OCI-LY7 (cell line): ENCODE measurements at regions of chr11 and their contacts with region 1.

Region 1: DNA sequence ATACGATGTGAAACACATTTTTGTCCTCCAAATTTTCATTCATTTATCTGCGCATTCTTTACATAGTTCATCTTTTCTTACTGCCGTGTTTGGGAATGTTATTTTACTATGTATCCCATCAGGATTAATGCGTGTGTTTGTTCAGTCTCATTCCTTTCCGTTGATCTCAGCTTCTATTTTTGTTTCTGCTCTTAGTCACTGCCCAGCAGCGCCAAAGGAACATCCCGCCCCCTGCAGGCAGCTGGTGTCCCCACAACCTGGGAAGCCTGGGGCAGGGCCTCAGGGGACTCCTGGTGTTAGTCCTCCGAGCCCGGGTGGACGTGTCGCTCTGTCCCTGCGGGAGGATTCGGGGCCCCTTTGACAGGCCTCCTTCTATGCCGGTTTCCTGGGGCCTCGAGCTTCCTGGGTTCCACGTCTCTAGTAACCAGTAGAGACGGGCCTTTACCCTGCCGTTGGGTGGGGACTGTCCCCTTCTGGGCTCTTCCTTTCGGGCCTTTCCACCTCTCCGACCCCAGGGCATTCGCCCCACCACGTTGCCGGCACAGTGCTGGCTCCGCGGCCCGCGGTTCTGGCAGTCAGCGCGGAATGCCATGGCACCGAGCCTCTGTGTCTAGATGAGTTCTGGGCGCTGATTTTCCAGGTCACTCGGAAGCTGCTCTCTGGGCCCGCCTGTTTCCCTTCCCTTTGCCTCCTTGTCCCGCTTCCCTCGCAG is 39.8 kb downstream of the WEE1 start:
- DNase-seq: peak; percentile 92
- H3K4me3 ChIP-seq: peak overlapping the region; percentile 72
- H3K27ac ChIP-seq: peak overlapping the region; percentile 99
- H3K4me1 ChIP-seq: peaks cover 96% of the 10 kb centered on the region
- CTCF ChIP-seq: peak; percentile 99

Region 2: DNA sequence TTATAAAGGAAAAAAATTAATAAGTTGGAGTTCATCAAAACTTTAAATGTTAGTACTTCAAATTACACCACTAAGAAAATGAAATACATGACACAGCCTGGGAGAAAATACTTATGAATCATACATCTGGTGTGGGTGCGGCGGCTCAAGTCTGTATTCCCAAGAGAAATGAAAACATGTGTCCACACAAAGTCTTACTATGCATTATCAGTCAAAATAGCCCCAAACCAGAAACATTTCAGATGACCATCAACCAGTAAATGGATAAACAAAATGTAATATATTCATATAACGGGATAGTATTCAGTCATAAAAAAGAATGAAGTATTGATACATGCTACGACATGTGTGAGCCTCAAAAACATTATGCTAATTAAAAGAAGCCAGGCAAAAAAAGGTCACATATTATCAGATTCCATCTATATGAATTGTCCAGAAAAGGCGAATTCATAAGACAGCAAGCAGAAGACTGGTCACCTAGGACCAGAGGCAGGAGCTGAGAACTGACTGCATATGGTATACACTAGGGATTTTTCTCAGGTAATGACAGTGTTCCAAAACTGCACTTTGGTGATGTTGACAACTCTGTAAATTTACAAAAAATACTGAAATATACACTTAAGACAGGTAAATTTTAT is 707.6 kb before region 1 on chr11:
- CTCF ChIA-PET with region 1: no interaction called
- POLR2A ChIA-PET with region 1: no interaction called
- intact Hi-C with region 1: no loop called
- DNase-seq: no peak
- H3K4me3 ChIP-seq: no peak overlapping the region
- H3K27ac ChIP-seq: no peak overlapping the region
- H3K4me1 ChIP-seq: no peaks in the 10 kb centered on the region
- CTCF ChIP-seq: no peak

Region 3: DNA sequence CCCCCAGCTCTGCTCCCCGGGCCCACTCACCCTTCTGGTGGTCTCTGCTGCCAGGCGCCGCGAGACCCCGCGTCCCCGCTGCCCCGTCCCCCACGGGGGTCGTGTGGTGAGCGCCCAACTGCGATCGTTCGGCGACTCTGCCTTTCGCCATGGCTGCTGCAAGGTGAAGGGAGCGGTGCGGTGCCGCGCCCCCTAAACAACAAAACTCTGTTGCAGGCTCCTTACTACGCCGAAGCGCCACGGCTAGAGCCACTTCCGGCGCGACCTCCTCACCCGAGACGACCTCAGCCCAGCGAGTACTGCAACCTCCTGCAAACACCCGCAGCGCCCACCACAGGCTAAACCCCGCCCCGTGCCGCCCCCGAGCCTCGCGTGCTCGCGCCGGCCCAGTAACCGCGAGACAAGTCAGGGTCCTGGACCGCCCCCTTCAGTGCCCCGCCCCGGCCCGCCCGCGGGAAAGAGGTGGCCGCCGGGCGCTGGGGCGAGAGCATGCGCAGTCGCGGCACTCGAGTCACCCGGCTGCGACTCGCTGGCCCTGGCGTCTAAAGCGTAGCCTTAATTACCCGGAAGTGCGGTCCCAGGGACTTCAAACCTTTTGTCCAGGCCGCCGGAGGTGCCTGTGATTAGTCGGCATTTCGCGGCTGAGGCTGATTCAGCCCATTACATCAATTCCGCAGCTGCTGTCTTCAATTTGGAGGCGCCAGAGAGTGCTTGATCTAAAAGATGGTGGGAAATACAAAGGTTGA is 298.8 kb before region 1 on chr11 and contains the start of gene TMEM41B:
- CTCF ChIA-PET with region 1: no interaction called
- POLR2A ChIA-PET with region 1: interaction called, 3 read pairs
- intact Hi-C with region 1: loop called (anchors 5 kb)
- DNase-seq: peak; percentile 100
- H3K4me3 ChIP-seq: peak within 1 kb of the TSS; percentile 98
- H3K27ac ChIP-seq: peak within 1 kb of the TSS; percentile 89
- H3K4me1 ChIP-seq: peaks cover 27% of the 10 kb centered on the region
- CTCF ChIP-seq: 0 out of 2 replicates have a peak, but pooled peaks have one; percentile 40
- total RNA-seq, gene TMEM41B: 46.9 and 53.9 TPM in 2 replicates

Region 4: GRCh38 chr11:9506489-9507276 is 106.6 kb before region 1 on chr11:
- CTCF ChIA-PET with region 1: interaction called, 4 read pairs
- POLR2A ChIA-PET with region 1: no interaction called
- intact Hi-C with region 1: loop called (anchors 1 kb)
- DNase-seq: peak; percentile 85
- H3K4me3 ChIP-seq: no peak overlapping the region
- H3K27ac ChIP-seq: no peak overlapping the region
- H3K4me1 ChIP-seq: peaks cover 4% of the 10 kb centered on the region
- CTCF ChIP-seq: peak; percentile 99

Region 5: DNA sequence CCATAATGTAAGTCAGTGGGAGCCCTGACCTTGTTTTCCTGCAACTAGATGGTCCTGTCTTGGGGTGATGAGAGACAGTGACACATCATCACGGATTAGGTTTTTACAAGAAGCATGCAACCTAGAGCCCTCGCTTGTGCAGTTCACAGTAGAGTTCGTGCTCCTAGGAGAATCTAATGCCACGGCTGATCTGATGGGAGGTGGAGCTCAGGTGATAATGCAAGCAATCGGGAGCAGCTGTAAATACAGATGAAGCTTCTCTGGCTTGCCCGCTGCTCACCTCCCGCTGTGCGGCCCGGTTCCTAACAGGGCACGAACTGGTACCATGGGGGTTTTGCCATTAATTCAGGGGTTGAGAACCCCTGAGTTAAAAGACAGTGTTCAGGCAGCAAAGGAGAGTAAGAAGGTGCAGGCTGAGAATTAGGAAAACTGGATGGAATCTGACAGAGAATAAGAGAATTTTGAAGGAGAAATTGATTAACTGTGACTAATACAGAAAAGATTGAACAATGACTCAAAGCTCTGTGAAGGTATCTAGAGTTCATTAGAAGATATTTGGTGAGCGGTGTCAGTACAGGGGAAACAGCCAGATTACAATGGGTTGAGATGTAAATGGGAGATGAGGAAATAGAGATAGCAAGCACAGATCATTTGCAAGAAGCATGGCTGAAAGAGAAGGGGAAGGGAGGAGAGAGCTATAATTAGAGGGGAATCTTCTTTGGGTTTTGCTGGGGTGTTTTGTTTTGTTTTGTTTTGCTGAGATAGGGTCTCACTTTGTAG is 18.8 kb before region 1 on chr11:
- CTCF ChIA-PET with region 1: interaction called, 14 read pairs
- POLR2A ChIA-PET with region 1: interaction called, 239 read pairs
- intact Hi-C with region 1: loop called (anchors 1 kb)
- DNase-seq: peak; percentile 46
- H3K4me3 ChIP-seq: peak overlapping the region; percentile 61
- H3K27ac ChIP-seq: peak overlapping the region; percentile 95
- H3K4me1 ChIP-seq: peaks cover 71% of the 10 kb centered on the region
- CTCF ChIP-seq: no peak

Region 6: GRCh38 chr11:9663699-9664275 is 50.5 kb after region 1 on chr11 and contains the start of gene SWAP70:
- CTCF ChIA-PET with region 1: no interaction called
- POLR2A ChIA-PET with region 1: interaction called, 4 read pairs
- intact Hi-C with region 1: loop called (anchors 1 kb)
- DNase-seq: peak; percentile 90
- H3K4me3 ChIP-seq: peak within 1 kb of the TSS; percentile 82
- H3K27ac ChIP-seq: peak within 1 kb of the TSS; percentile 76
- H3K4me1 ChIP-seq: peaks cover 36% of the 10 kb centered on the region
- CTCF ChIP-seq: no peak
- total RNA-seq, gene SWAP70: 37.5 and 44.4 TPM in 2 replicates

Region 7: GRCh38 chr11:9861860-9862725 is 248.8 kb after region 1 on chr11:
- CTCF ChIA-PET with region 1: no interaction called
- POLR2A ChIA-PET with region 1: interaction called, 3 read pairs
- intact Hi-C with region 1: loop called (anchors 5 kb)
- DNase-seq: peak; percentile 80
- H3K4me3 ChIP-seq: no peak overlapping the region
- H3K27ac ChIP-seq: peak overlapping the region; percentile 21
- H3K4me1 ChIP-seq: peaks cover 32% of the 10 kb centered on the region
- CTCF ChIP-seq: peak; percentile 98